Vagina (tissue), 2 donors: ENCODE measurements at regions of chr13 and their contacts with region 1.

Region 1: GRCh38 chr13:51583875-51584730 is at the start of gene WDFY2:
- DNase-seq: peak; percentile 100
- H3K4me3 ChIP-seq: peak within 1 kb of the TSS; percentile 81 to 97
- H3K27ac ChIP-seq: peak within 1 kb of the TSS; percentile 96
- H3K4me1 ChIP-seq: peaks cover 34% of the 10 kb centered on the region
- H3K27me3 ChIP-seq: no peaks in the 10 kb centered on the region
- CTCF ChIP-seq: no peak
- POLR2A ChIP-seq: peak; percentile 69 to 91
- total RNA-seq, gene WDFY2: 26.3 TPM

Region 2: GRCh38 chr13:51452361-51453206 is 131.5 kb before region 1 on chr13 and contains the start of gene INTS6:
- intact Hi-C with region 1: loop called (anchors 2 kb)
- DNase-seq: peak; percentile 100
- H3K4me3 ChIP-seq: peak within 1 kb of the TSS; percentile 94 to 99
- H3K27ac ChIP-seq: peak within 1 kb of the TSS; percentile 100
- H3K4me1 ChIP-seq: peaks cover 28% of the 10 kb centered on the region
- H3K27me3 ChIP-seq: no peaks in the 10 kb centered on the region
- CTCF ChIP-seq: no peak
- POLR2A ChIP-seq: peak; percentile 90 to 100
- total RNA-seq, gene INTS6: 56.2 TPM

Region 3: DNA sequence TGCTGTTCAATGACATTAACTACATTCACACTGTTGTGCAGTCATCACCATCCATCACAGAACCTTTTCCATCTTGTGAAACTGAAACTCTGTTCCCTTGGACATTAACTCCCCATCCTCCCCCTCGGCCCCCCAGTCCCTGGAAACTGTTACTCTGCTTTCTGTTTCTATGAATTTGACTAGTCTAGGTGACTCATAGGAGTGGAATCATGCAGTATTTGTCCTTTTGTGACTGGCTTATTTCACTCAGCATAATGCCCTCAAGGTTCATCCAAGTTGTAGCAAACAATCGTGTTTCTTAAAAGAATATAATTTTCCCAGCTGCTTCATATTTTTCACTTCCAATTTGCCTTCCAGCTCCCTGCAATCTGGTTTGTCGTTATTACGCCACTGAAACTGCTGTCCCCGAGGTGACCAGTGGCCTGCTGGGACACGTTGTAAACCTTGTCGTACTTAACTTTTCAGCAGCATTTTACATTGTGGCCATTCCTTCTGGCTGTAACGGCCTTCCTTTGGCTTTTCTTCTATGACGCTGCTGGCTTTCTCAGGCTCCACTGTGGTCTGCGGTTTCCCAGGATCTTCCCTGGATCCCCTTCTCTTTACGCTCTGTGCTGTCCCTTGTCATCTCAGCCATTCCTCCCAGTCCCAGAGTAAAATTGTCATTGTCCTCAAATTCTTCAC is 145.9 kb after region 1 on chr13:
- intact Hi-C with region 1: loop called (anchors 10 kb)
- DNase-seq: no peak
- H3K4me3 ChIP-seq: no peak overlapping the region
- H3K27ac ChIP-seq: peak overlapping the region; percentile 77
- H3K4me1 ChIP-seq: peaks cover 45% of the 10 kb centered on the region
- H3K27me3 ChIP-seq: no peaks in the 10 kb centered on the region
- CTCF ChIP-seq: no peak
- POLR2A ChIP-seq: no peak

Region 4: DNA sequence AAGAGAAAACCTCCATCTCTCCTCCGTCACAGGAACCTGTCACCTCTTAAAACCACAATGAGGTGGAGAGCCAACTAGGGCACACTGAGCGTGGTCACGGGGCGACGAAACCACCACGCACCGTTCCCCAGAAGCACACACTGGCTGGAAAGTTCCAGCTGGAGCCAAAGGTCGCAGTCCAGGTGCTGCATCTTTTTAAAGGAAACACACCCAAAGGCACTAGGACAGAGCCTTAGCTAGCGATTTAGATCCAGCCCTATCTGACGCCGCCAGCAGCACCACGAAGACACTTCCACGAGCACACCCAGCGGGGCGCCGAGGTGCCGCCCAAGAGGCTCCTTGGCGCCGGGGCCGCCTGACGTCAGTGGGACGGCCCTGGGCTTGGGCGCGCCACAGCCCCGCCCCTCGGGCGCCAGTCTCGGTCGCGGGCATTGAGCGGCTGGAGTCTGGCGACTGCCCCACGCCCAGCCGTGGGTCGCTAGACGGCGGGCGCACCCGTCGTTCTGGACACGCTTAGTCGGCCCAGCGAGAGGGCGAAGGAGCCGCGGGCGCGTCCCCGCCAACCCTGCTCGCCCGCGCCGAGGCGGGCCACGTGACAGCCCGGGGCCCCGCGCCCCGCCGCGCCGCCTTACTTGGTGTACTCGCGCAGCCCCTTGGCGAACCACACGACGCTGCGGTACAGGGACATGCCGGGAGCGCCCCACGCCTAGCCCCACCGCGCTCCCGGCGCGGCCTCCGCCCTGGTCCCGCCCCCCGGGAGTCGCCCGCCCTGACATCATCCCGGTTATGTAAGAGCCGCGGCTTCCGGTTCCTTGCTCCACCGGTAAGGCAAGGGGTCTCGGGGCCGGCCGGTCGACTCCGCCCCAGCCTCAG is 219.6 kb after region 1 on chr13 and contains the start of gene DHRS12:
- intact Hi-C with region 1: loop called (anchors 5 kb)
- DNase-seq: peak in 1 of 2 donors; percentile 95
- H3K4me3 ChIP-seq: peak within 1 kb of the TSS; percentile 61 to 97
- H3K27ac ChIP-seq: peak within 1 kb of the TSS; percentile 100
- H3K4me1 ChIP-seq: peaks cover 38% of the 10 kb centered on the region
- H3K27me3 ChIP-seq: no peaks in the 10 kb centered on the region
- CTCF ChIP-seq: no peak
- POLR2A ChIP-seq: peak; percentile 39 to 78
- total RNA-seq, gene DHRS12: 12.5 TPM